ENCODE measurements at regions of chr3 and their contacts with region 1.

Region 1: DNA sequence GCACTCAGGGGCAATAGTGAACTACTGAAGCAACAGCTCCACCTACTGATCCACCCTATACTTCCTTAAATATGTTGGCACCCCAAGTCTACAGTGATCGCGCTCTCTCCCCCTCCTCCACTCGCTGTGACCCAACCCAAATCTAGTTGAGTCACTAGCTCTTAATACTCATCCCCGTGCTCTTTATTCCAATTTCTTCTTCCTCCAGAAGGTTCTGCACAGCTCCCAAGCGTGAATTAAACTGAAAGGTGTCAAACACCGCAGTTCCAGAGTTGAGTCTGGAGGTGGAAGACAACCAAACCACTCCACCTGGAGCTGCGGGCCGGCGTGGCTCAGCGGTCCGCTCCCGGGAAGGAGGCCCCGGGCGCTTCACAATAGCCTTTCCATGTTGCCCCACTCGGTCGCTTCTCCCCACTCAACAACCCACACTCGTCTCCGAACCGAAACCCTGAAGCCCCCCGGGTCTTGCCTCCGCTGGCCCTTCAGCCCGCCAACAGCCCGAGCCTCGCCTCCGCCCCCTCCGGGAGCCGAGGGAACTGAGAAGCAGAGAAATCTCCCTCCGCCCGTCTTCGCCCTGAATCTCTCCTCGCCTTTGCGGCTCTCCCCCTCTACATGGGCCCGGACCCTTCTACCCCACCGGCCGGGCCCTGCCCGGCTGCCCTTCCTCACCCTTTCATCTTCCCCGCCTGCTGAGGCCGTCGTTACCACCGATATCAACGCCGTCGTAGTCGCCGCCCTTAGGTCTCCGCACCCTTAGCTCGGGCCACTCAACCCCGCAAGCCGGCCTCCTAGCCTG is 578 bp downstream of the NAA50 start:
- DNase-seq: peak; percentile 90
- ATAC-seq: peak; percentile 59
- H3K4me3 ChIP-seq: peak overlapping the region; percentile 82
- H3K27ac ChIP-seq: peak overlapping the region; percentile 85
- H3K4me1 ChIP-seq: peaks cover 6% of the 10 kb centered on the region; the same call in 1 of the 2 replicates
- H3K27me3 ChIP-seq: no peaks in the 10 kb centered on the region
- CTCF ChIP-seq: peak; percentile 80
- POLR2A ChIP-seq: peak; percentile 42
- RAD21 ChIP-seq: peak; percentile 74

Region 2: DNA sequence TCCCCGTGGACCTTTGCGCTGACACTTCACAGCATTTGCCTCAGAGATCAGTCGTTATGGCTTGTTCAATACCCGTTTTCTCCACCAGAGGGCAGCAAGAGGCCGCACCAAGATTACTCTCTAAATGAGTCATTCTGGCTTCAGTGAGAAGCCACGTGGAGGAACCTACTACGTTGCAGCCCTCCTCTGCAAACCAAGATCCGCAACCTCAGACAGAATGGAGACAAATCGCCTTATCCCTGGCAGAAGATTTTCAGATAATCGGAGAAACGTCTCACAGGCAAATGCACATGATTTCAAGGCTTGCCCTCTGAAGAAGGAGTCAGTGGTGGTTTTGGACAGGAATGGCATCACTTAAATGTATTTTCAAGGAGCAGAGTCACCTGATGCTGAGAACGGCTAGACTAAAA is 694.2 kb before region 1 on chr3:
- CTCF ChIA-PET with region 1: no interaction called
- POLR2A ChIA-PET with region 1: no interaction called
- dilution Hi-C with region 1: no loop called
- in situ Hi-C with region 1: no loop called
- intact Hi-C with region 1: loop called (anchors 10 kb)
- DNase-seq: peak; percentile 78
- ATAC-seq: peak; percentile 85
- H3K4me3 ChIP-seq: no peak overlapping the region
- H3K27ac ChIP-seq: no peak overlapping the region
- H3K4me1 ChIP-seq: peaks cover 5% of the 10 kb centered on the region
- H3K27me3 ChIP-seq: peaks cover 10% of the 10 kb centered on the region
- CTCF ChIP-seq: peak; percentile 87
- POLR2A ChIP-seq: no peak
- RAD21 ChIP-seq: peak; percentile 96

Region 3: DNA sequence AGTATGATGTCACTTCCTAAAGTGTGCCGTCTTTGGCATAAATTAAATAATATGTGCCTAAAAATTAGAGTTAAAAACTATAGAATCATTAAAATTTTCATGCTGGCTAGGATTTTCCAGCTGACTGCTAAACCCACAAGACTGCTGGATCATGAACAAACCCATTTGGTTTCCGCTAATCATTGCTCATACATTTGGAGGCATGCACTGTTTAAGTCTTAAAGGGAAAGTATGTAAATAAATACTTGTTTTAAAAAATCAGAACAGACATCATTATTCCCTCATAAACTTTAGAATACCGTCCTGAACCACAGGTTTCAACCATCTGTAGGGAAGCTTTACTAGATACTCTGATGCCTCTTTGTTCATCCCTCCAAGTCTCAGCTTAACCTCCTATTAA is 27.9 kb after region 1 on chr3:
- CTCF ChIA-PET with region 1: no interaction called
- POLR2A ChIA-PET with region 1: interaction called, 8 read pairs
- dilution Hi-C with region 1: no loop called
- in situ Hi-C with region 1: no loop called
- intact Hi-C with region 1: loop called (anchors 2 kb)
- DNase-seq: peak; percentile 91
- ATAC-seq: peak; percentile 84
- H3K4me3 ChIP-seq: no peak overlapping the region
- H3K27ac ChIP-seq: peak overlapping the region; percentile 93; the same call in 1 of the 2 replicates
- H3K4me1 ChIP-seq: peaks cover 13% of the 10 kb centered on the region
- H3K27me3 ChIP-seq: no peaks in the 10 kb centered on the region
- CTCF ChIP-seq: no peak
- POLR2A ChIP-seq: no peak
- RAD21 ChIP-seq: no peak

Region 4: DNA sequence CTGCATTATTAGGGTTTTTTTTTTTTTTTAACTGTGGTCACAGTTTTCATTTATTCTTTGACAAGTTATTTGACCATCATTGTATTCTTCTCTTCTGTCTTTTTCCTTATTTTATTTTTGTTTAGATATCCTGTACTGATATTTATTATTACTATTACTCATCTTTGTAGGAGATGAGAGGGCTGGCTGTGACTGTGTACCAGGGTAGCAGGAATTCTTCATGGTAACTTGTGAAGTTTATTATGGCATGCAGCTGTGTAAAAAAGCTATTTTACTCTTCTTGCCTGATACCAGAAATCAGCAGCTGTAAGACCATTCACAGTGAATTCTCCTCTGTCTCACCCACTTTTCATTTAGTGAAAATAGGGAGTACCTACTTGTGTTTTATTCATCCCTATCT is 45.9 kb after region 1 on chr3:
- CTCF ChIA-PET with region 1: interaction called, 4 read pairs
- POLR2A ChIA-PET with region 1: no interaction called
- dilution Hi-C with region 1: no loop called
- in situ Hi-C with region 1: no loop called
- intact Hi-C with region 1: loop called (anchors 2 kb)
- DNase-seq: peak; percentile 64
- ATAC-seq: peak; percentile 79
- H3K4me3 ChIP-seq: no peak overlapping the region
- H3K27ac ChIP-seq: no peak overlapping the region
- H3K4me1 ChIP-seq: peaks cover 2% of the 10 kb centered on the region; the same call in 1 of the 2 replicates
- H3K27me3 ChIP-seq: no peaks in the 10 kb centered on the region
- CTCF ChIP-seq: no peak
- POLR2A ChIP-seq: no peak
- RAD21 ChIP-seq: no peak

Region 5: DNA sequence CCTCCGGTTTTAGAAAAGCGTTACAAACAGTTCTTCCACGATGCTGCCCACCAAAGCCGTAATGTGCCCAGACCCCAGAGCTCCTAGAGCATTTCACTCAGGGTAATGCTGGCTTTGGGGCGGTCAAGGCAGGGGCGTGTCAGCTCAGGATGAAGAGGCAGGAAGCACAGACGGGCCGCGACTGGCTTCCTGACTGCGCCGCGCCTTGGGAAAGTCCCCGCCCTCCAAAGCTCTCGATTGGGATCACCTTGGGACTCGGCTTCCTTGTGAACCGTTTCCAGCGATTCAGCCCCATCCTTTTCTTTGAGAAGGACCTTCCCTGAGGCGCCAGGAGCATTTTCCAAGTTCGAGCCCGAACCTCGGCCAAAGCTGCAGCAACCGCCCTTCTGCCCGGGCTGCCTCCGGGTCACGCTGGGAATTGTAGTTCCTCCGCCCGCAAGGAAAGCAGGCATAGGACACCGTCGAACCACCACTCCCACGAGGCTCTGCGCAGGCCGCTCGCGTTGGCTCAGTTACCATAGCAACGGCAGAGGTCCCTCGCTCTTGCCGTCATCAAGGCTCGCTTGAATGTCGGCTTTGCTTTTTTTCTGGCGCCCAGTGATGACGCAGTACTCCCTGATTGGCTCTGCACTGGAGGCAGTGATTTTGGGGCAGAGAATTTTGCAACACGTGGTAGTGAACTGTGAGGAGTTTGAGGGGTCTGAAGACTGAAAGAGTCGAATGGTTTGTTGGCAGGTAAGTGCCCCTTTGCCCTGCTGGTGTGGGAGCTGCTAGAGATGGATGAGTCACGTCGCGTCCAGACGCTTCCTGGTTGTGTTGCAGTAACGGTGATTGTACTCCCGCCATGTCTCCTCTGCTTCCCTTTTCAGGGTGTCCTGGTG is 310.9 kb after region 1 on chr3 and contains the starts of genes CCDC191 and QTRT2:
- CTCF ChIA-PET with region 1: no interaction called
- POLR2A ChIA-PET with region 1: no interaction called
- dilution Hi-C with region 1: no loop called
- in situ Hi-C with region 1: no loop called
- intact Hi-C with region 1: loop called (anchors 10 kb)
- DNase-seq: peak; percentile 99
- ATAC-seq: peak; percentile 99
- H3K4me3 ChIP-seq: peak within 1 kb of the TSS; percentile 76
- H3K27ac ChIP-seq: peak within 1 kb of the TSS; percentile 70
- H3K4me1 ChIP-seq: no peaks in the 10 kb centered on the region
- H3K27me3 ChIP-seq: no peaks in the 10 kb centered on the region
- CTCF ChIP-seq: no peak
- POLR2A ChIP-seq: no peak; the same call in 1 of the 2 replicates
- RAD21 ChIP-seq: no peak
- total RNA-seq, gene CCDC191: 0.72 and 0.83 TPM in 2 replicates
- total RNA-seq, gene QTRT2: 15.6 and 20.3 TPM in 2 replicates

Measured in IMR-90 (cell line).